CD4-positive, alpha-beta T cell (primary cell): ENCODE measurements at regions of chr3 and their contacts with region 1.

Region 1: DNA sequence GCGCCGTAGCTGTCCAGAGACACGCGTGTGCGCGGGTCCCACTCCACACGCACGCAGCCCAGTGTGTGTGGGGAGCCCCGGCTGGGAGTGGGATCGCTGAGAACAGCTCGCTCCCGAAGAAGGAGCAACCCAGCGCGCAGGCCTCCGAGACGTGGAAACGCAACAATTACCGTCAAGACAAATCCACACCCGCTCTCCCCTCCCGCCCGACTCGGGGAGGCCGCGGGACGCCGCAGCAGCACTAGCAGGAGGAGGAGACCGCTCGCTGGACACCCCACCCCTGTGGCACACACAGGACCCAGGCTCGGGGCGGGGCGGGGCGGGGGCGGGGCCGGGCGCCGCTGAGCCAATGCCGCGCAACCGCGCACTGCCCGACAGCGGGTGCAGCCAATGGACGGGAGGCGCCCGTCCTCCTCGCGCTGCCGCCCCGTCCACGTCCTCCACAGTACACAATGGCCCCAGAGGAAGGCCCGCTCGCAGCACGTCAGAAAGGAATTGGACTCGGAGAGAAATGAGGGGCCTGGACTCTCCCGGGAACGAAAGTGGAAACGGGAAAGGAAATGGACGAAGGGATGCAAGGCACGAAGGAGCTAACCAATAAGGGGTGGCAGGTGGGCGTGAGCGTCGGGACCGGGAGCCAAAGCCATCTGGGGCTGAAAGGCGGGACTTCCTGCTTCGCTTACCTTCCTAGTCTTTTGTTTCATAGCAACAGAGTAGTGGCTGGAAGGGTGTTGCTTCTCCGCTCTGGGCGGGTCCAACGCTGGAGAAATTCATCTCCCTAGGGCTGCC is at the start of gene CBLB:
- DNase-seq: peak; percentile 67 to 94 (median 78)
- ATAC-seq: peak; percentile 86
- H3K4me3 ChIP-seq: peak within 1 kb of the TSS; percentile 89
- H3K4me3 Mint-ChIP-seq: peak within 1 kb of the TSS; percentile 99
- H3K27ac ChIP-seq: peak within 1 kb of the TSS; percentile 77 to 79
- H3K27ac Mint-ChIP-seq: peak within 1 kb of the TSS; percentile 89
- H3K4me1 ChIP-seq: peaks cover 10% of the 10 kb centered on the region
- H3K4me1 Mint-ChIP-seq: peaks cover 69% of the 10 kb centered on the region
- H3K27me3 ChIP-seq: no peaks in the 10 kb centered on the region
- H3K27me3 Mint-ChIP-seq: no peaks in the 10 kb centered on the region
- CTCF ChIP-seq: no peak
- total RNA-seq, gene CBLB: 112 to 124 TPM

Region 2: DNA sequence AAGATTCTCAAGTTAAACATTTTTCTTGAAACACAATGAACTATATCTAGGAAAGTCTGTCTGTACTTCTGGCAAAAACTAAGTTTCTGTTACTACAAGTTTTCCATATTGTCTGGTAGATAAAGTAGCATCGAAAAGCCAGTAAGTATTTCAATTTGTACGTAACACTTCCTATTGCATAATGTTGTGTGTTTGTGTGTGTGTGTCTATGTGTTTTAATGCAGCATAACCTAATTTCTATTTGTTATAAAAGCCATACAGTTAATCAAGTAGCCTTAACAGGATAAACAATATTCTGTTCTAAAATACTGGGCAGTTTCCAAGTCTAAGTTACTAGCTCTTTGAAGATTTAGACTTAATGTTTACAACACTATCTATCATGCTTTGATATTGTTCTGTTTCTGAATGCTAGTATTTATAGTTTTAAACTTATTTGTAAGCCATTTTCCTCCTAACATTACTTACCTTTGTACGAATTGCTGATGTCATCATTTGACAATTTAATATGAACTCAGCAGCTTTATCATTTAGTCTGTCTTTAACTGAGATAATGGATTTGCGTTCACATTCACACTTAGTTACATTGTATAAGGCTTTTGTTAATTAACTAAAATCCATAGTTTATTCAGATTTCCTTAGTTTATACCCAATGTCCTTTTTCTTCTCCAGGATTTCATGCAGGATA is 164.1 kb before region 1 on chr3:
- CTCF ChIA-PET with region 1: no interaction called
- POLR2A ChIA-PET with region 1: no interaction called
- intact Hi-C with region 1: loop called in 1 of 2 experiments (anchors 5 kb)
- DNase-seq: no peak
- ATAC-seq: no peak
- H3K4me3 ChIP-seq: no peak overlapping the region
- H3K4me3 Mint-ChIP-seq: no peak overlapping the region
- H3K27ac ChIP-seq: no peak overlapping the region
- H3K27ac Mint-ChIP-seq: peak overlapping the region; percentile 1
- H3K4me1 ChIP-seq: no peaks in the 10 kb centered on the region
- H3K4me1 Mint-ChIP-seq: peaks cover 19% of the 10 kb centered on the region
- H3K27me3 ChIP-seq: no peaks in the 10 kb centered on the region
- H3K27me3 Mint-ChIP-seq: no peaks in the 10 kb centered on the region
- CTCF ChIP-seq: no peak

Region 3: DNA sequence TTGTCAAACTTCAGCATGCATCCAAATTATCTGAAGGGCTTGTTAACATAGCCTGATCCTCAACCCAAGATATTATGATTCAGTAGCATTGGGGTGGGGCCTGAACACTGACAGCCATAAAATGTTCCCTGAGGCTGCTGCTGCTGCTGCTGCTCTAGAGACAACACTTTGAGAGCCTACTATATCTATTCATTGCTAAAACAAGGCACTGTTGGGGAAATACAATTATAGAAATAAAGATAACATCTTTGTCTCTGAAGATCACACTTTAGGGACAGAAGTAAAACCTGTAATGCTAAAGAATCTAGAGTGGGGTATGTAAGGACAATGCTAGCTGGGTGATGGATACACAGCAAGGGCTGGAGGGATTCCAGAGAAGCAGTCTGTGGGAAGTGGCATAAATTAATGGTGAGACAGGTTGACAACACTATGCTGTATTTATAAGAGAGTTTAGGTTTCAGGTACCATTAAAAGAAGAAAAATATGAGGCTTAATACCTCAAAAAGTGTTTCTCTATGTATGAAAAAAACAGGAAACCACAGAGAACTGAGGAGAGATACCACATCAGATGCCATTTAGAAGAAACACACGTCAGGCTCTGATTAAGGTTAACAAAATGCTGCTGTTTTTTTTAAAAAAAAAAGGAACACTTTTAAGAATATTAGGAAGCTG is 116.1 kb before region 1 on chr3:
- CTCF ChIA-PET with region 1: no interaction called
- POLR2A ChIA-PET with region 1: interaction called, 7 read pairs
- intact Hi-C with region 1: loop called (anchors 2 to 5 kb)
- DNase-seq: peak; percentile 27 to 90 (median 44)
- ATAC-seq: peak; percentile 81
- H3K4me3 ChIP-seq: peak overlapping the region; percentile 19
- H3K4me3 Mint-ChIP-seq: peak overlapping the region; percentile 77
- H3K27ac ChIP-seq: peak overlapping the region; percentile 65 to 67
- H3K27ac Mint-ChIP-seq: peak overlapping the region; percentile 94
- H3K4me1 ChIP-seq: peaks cover 35% of the 10 kb centered on the region
- H3K4me1 Mint-ChIP-seq: peaks cover 90% of the 10 kb centered on the region
- H3K27me3 ChIP-seq: no peaks in the 10 kb centered on the region
- H3K27me3 Mint-ChIP-seq: no peaks in the 10 kb centered on the region
- CTCF ChIP-seq: no peak

Region 4: DNA sequence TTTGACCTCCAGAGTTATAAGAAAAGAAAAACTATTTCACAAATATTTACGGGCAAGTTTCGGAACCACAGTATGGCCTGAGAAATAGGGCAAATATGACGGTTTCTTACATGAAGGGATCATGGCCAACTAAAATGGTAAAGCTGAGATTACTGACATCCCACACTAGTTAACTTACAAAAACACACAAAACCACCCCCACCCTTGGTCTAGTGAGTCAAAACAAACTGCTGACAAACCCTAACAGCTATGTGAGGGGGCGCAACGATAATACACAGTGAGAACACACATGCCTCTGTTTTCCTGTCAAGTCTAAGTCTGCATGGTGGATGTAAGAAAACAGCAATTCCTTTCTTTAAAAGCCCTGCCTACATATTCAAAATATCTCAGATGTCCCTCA is 32.4 kb before region 1 on chr3:
- CTCF ChIA-PET with region 1: interaction called, 4 read pairs
- POLR2A ChIA-PET with region 1: interaction called, 10 read pairs
- intact Hi-C with region 1: loop called in 1 of 2 experiments (anchors 2 kb)
- DNase-seq: peak in 4 of 14 experiments; percentile 40 to 66 (median 42)
- ATAC-seq: peak; percentile 65
- H3K4me3 ChIP-seq: peak overlapping the region; percentile 21
- H3K4me3 Mint-ChIP-seq: peak overlapping the region; percentile 40
- H3K27ac ChIP-seq: no peak overlapping the region
- H3K27ac Mint-ChIP-seq: peak overlapping the region; percentile 78
- H3K4me1 ChIP-seq: peaks cover 2% of the 10 kb centered on the region
- H3K4me1 Mint-ChIP-seq: peaks cover 86% of the 10 kb centered on the region
- H3K27me3 ChIP-seq: no peaks in the 10 kb centered on the region
- H3K27me3 Mint-ChIP-seq: no peaks in the 10 kb centered on the region
- CTCF ChIP-seq: no peak